Head of caudate nucleus (tissue), 42 donors: ENCODE measurements at regions of chr4 and their contacts with region 1.

Region 1: GRCh38 chr4:38663801-38664705 is at the start of gene KLF3:
- DNase-seq: peak; percentile 75 to 97 (median 92)

Region 2: GRCh38 chr4:37686373-37687193 is 977.5 kb before region 1 on chr4 and contains the start of gene RELL1:
- intact Hi-C with region 1: loop called (anchors 10 kb)
- DNase-seq: peak; percentile 98 to 100 (median 100)

Region 3: GRCh38 chr4:38547052-38547451 is 117.0 kb before region 1 on chr4:
- intact Hi-C with region 1: no loop called
- DNase-seq: no peak

Region 4: GRCh38 chr4:38576767-38577166 is 87.3 kb before region 1 on chr4:
- intact Hi-C with region 1: loop called (anchors 2 kb)
- DNase-seq: no peak

Region 5: DNA sequence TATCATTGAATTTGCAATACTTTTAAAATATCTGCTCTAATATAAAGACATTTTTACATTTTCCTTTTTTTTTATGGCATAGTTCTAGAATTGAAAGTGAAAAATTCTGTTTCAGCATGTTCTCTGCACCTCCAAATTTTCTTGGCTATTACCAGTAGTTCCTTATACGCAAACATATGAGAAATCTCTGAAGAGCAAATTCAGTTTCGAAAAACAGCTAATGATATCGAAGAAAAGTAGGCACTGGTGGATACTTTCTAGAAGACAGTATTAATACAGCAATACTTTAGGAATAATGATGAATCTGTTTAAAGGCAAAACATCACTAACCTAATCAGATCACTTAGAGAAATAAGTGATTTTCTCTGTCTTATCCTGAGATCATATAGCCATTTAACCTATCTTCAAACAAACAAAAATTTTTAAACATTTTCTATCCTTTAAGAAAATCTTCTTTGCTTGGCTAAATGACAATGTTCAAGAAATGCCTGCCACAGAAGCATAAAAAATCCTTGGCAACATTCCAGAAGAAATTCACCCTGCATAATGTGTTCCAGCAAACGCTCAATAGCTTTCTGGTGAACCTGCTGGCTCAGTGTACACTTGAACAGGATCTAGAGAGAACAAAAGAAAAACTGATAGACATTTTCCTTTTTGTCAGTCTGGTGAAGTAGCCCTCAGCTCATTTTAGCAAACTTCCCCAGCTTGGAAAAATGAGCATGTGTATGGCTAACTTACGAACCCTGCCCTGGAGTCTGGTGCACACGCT is 51.2 kb before region 1 on chr4:
- intact Hi-C with region 1: loop called (anchors 5 kb)
- DNase-seq: peak in 5 of 42 donors; percentile 13 to 54 (median 25)